Panc1 (cell line): ENCODE measurements at regions of chr12 and their contacts with region 1.

Region 1: GRCh38 chr12:105831372-105831771 is 307.4 kb downstream of the NUAK1 start:
- DNase-seq: no peak
- ATAC-seq: no peak
- H3K4me3 ChIP-seq: no peak overlapping the region
- H3K27ac ChIP-seq: no peak overlapping the region
- H3K4me1 ChIP-seq: no peaks in the 10 kb centered on the region
- H3K27me3 ChIP-seq: no peaks in the 10 kb centered on the region
- CTCF ChIP-seq: 0 out of 2 replicates have a peak, but pooled peaks have one; percentile 8

Region 2: GRCh38 chr12:105882404-105882803 is 51.0 kb after region 1 on chr12:
- CTCF ChIA-PET with region 1: no interaction called
- POLR2A ChIA-PET with region 1: no interaction called
- in situ Hi-C with region 1: no loop called
- intact Hi-C with region 1: no loop called
- DNase-seq: no peak
- ATAC-seq: no peak
- H3K4me3 ChIP-seq: no peak overlapping the region
- H3K27ac ChIP-seq: no peak overlapping the region
- H3K4me1 ChIP-seq: no peaks in the 10 kb centered on the region
- H3K27me3 ChIP-seq: no peaks in the 10 kb centered on the region
- CTCF ChIP-seq: no peak

Region 3: DNA sequence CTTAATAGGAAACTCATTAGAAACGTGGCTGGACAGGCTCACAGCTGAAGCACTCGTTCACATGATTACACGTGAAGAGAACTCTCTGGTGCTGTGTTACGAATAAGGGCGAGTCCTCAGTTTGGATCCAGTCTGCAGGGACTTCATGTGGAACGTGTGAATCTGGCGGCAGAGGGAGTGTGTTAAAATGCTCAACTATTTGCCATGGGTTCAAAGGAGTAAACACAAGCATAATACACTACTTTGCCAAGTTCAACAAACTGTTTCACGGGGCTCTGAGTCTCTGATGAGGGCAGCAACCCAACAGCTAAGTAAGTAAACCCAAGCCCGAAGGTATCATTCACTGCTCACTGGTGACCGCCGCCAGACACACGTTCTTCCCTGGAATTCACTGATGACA is 265.0 kb after region 1 on chr12:
- CTCF ChIA-PET with region 1: no interaction called
- POLR2A ChIA-PET with region 1: interaction called, 14 read pairs
- in situ Hi-C with region 1: no loop called
- intact Hi-C with region 1: no loop called
- DNase-seq: peak; percentile 70
- ATAC-seq: peak; percentile 82
- H3K4me3 ChIP-seq: no peak overlapping the region
- H3K27ac ChIP-seq: peak overlapping the region; percentile 80
- H3K4me1 ChIP-seq: peaks cover 56% of the 10 kb centered on the region
- H3K27me3 ChIP-seq: no peaks in the 10 kb centered on the region
- CTCF ChIP-seq: no peak